ENCODE measurements at regions of chr22 and their contacts with region 1.

Region 1: GRCh38 chr22:38766076-38766777 is 10.4 kb upstream of the SUN2 start:
- DNase-seq: no peak

Region 2: DNA sequence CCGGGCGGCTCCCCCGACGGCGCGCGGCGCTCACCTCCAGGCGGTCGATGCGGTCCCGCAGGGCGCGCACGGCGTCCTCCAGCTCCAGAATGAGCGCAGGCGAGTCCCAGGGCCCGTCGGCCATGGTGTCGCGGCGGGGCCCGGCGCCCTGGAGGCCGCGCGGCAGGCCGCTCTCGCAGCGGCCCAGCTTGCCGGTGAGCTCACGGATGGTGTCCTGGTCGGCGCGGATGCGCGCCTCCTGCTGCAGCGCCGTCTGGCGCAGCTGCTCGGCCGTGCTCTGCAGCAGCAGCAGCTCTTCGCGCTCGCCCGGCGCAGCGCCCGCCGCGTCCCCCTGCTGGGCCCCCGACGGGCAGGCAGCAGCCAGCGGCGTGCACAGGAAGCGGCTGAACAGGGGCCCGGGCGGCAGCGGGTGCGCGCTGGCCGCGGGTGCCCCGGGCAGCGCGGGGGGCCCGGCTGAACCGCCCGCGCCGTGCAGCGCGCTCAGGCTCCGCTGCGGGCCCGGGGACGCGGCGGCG is 77.0 kb after region 1 on chr22:
- intact Hi-C with region 1: loop called (anchors 2 kb)
- DNase-seq: no peak

Region 3: DNA sequence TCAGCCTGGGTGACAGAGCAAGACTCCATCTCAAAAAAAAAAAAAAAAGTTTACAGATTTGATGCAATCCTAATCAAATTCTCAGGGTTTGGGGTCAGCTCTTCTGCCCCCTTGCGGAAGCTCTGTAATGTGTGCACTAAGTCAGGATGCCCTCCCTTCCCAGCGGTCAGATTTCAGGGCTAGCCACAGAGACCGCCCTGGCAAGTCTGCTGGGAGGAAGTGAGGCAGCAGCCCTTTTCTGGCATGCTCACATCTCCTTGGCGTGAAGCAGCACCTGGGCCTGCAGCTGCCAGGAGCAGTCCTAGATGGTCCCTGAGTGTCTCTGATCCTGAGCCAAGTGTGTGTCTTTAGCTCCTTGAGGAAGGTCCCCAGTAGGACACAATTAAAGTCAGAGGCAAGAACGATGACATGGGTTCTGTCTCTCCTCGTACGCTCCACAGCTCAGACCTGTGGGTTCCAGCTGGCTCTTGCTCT is 237.0 kb after region 1 on chr22:
- intact Hi-C with region 1: loop called (anchors 5 kb)
- DNase-seq: peak; percentile 84

Measured in cardiac septum (tissue), 1 donor.